Activated naive CD4-positive, alpha-beta T cell treated with anti-CD3 and anti-CD28 coated beads for 36 hours (primary cell): ENCODE measurements at regions of chr20 and their contacts with region 1.

Region 1: GRCh38 chr20:46089417-46090388 is at the start of gene NCOA5:
- DNase-seq: peak; percentile 96
- H3K4me3 Mint-ChIP-seq: peak within 1 kb of the TSS; percentile 86
- H3K27ac Mint-ChIP-seq: peak within 1 kb of the TSS; percentile 77
- H3K4me1 Mint-ChIP-seq: peaks cover 47% of the 10 kb centered on the region
- H3K27me3 Mint-ChIP-seq: no peaks in the 10 kb centered on the region
- total RNA-seq, gene NCOA5: 4.4 to 5.1 TPM

Region 2: DNA sequence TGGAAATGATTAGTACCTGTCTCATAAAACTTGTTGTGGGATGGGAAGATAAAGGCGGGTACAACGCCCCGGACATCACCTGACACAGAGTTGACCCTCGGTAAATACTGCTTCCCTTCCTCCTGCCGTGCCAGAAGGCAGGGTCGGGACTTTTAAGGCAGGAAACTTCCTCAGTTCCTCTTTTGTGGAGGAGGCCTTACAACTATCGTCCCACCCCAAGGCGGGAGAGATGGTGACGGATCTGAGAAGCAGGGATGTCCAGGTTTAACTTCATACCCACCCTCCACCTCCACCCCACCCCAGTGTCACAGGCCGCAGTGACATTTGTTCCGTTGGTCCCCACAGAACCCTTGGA is 297.4 kb before region 1 on chr20:
- CTCF ChIA-PET with region 1: no interaction called
- intact Hi-C with region 1: loop called (anchors 1 kb)
- DNase-seq: no peak
- H3K4me3 Mint-ChIP-seq: peak overlapping the region; percentile 86
- H3K27ac Mint-ChIP-seq: peak overlapping the region; percentile 63
- H3K4me1 Mint-ChIP-seq: peaks cover 9% of the 10 kb centered on the region
- H3K27me3 Mint-ChIP-seq: no peaks in the 10 kb centered on the region

Region 3: DNA sequence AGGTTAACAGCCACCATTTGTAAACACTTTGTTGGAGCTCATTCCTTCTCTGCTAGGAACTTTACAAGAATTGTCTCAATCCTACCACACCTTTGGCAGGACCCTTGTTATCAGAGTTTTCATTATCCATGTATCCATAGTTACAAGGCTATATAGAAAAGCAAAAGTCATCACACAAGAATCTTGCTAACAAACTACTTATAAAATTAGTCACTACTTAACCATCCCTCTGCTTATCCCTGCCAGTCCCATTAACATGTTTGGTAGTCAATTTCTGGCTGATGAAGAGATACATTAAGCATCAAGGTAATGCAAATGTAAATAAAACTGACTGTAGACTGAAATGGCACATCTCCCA is 221.9 kb before region 1 on chr20:
- CTCF ChIA-PET with region 1: no interaction called
- intact Hi-C with region 1: no loop called
- DNase-seq: no peak
- H3K4me3 Mint-ChIP-seq: no peak overlapping the region
- H3K27ac Mint-ChIP-seq: no peak overlapping the region
- H3K4me1 Mint-ChIP-seq: no peaks in the 10 kb centered on the region
- H3K27me3 Mint-ChIP-seq: no peaks in the 10 kb centered on the region

Region 4: DNA sequence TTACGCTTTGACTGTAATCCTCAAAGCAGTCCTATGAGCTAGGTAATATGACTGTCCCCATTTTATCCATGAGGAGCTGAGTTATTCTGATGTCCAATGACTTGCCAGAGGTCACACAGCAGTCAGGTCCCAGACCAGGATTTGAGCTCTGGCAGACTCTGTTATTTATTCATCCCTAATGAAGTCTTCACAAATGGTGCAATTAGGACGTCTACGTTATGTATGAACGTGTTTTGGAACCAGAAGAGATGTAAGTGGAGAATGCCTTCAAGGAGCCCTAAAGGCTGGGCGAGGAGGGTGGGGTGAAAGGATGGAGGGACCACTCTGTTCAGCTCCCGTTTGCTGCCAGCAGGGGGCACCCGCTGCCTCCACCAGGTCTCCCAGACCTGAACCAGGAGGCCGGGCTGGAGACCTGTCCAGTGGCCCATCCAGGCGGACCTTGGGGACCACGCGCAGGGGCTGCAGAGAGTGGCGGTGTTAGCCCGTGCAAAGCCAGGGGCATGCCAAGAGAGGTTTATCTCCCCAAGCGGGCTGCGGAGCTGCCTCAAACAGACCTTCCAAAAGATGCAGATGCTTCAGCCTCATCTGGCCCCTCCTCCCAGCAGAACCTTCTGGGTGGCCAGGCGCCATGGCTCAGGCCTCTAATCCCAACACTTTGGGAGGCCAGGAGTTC is 102.5 kb before region 1 on chr20:
- CTCF ChIA-PET with region 1: interaction called, 4 read pairs
- intact Hi-C with region 1: loop called (anchors 1 kb)
- DNase-seq: peak; percentile 85
- H3K4me3 Mint-ChIP-seq: no peak overlapping the region
- H3K27ac Mint-ChIP-seq: no peak overlapping the region
- H3K4me1 Mint-ChIP-seq: peaks cover 2% of the 10 kb centered on the region
- H3K27me3 Mint-ChIP-seq: no peaks in the 10 kb centered on the region

Region 5: GRCh38 chr20:46022411-46023147 is 67.1 kb before region 1 on chr20:
- CTCF ChIA-PET with region 1: interaction called, 3 read pairs
- intact Hi-C with region 1: loop called (anchors 1 kb)
- DNase-seq: peak; percentile 83
- H3K4me3 Mint-ChIP-seq: peak overlapping the region; percentile 63
- H3K27ac Mint-ChIP-seq: no peak overlapping the region
- H3K4me1 Mint-ChIP-seq: peaks cover 8% of the 10 kb centered on the region
- H3K27me3 Mint-ChIP-seq: peaks cover 32% of the 10 kb centered on the region

Region 6: GRCh38 chr20:46139908-46140482 is 50.3 kb after region 1 on chr20:
- CTCF ChIA-PET with region 1: no interaction called
- intact Hi-C with region 1: no loop called
- DNase-seq: no peak
- H3K4me3 Mint-ChIP-seq: no peak overlapping the region
- H3K27ac Mint-ChIP-seq: no peak overlapping the region
- H3K4me1 Mint-ChIP-seq: no peaks in the 10 kb centered on the region
- H3K27me3 Mint-ChIP-seq: peaks cover 20% of the 10 kb centered on the region

Region 7: GRCh38 chr20:46406199-46406985 is 316.7 kb after region 1 on chr20 and contains the start of gene ELMO2:
- CTCF ChIA-PET with region 1: no interaction called
- intact Hi-C with region 1: loop called (anchors 1 kb)
- DNase-seq: peak; percentile 98
- H3K4me3 Mint-ChIP-seq: peak within 1 kb of the TSS; percentile 88
- H3K27ac Mint-ChIP-seq: peak within 1 kb of the TSS; percentile 88
- H3K4me1 Mint-ChIP-seq: peaks cover 55% of the 10 kb centered on the region
- H3K27me3 Mint-ChIP-seq: no peaks in the 10 kb centered on the region
- total RNA-seq, gene ELMO2: 76.8 to 81.0 TPM